Naive thymus-derived CD4-positive, alpha-beta T cell (primary cell): ENCODE measurements at regions of chr7 and their contacts with region 1.

Region 1: DNA sequence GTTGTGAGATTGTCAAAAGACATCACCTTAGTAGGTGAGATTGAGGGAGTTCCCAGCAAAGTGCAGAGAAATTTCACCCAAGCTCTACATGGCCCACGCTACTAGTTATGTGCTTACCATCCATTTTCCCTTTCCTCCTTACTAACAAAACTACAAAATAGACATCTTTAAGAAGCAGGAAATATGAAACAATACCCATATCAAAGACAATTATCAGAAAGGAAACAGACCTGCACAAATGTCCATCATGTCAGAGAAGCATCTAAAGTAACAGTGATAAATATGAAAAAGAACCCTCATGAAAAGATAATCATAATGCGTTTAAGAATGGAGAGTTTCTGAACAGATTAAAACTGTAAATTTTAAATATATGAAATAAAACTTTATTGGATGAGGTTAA is 28.2 kb downstream of the GIMAP4 start:
- DNase-seq: no peak
- ATAC-seq: no peak
- H3K4me3 ChIP-seq: no peak overlapping the region
- H3K4me3 Mint-ChIP-seq: peak overlapping the region in 8 of 10 donors; percentile 2 to 56 (median 29)
- H3K27ac ChIP-seq: no peak overlapping the region
- H3K27ac Mint-ChIP-seq: peak overlapping the region in 7 of 9 donors; percentile 8 to 82 (median 49)
- H3K4me1 ChIP-seq: peaks cover 7 to 18% of the 10 kb centered on the region in 2 donors
- H3K4me1 Mint-ChIP-seq: peaks cover 33 to 87% (median 79%) of the 10 kb centered on the region in 7 donors
- H3K27me3 ChIP-seq: no peaks in the 10 kb centered on the region
- H3K27me3 Mint-ChIP-seq: no peaks in the 10 kb centered on the region

Region 2: DNA sequence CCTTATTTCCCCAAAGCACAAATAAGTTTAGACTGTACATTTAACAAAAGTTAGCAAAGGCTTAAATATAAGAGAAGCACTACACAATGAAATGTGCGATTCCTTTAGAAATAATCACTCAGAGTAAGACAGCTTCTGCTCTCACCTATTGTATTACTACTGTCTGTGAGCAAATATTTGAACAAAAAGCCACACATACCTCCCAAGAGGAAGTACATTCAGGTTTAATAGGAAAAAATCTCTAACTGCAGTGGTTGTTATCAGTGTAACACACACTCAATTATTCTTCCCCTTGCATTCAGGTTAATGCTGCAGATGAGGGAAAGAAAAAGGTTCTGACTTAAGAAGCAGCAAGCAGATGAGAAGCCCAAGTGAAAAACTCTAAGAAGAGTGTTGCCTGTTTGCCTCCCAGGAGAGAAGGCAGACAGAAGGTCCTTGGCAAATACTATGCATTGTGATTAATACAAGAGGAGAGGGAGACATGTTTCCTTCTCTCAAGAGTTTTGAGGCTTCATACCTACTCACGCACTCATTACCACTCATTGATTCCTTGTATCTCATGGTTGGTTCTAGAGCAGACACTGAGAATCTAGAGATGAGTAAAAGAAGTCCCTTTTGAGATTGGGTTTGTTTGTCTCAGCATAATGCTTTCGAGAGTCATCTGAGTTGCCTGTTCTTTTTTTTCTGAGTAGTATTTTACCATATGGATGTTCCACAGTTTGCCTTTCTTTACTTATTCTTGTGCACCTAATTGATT is 14.5 kb before region 1 on chr7:
- CTCF ChIA-PET with region 1: interaction called, 3 read pairs
- POLR2A ChIA-PET with region 1: interaction called, 26 read pairs
- intact Hi-C with region 1: loop called in 1 of 2 experiments (anchors 2 kb)
- DNase-seq: no peak
- ATAC-seq: no peak
- H3K4me3 ChIP-seq: no peak overlapping the region
- H3K4me3 Mint-ChIP-seq: peak overlapping the region in 2 of 10 donors; percentile 16 to 40
- H3K27ac ChIP-seq: no peak overlapping the region
- H3K27ac Mint-ChIP-seq: peak overlapping the region in 8 of 9 donors; percentile 5 to 78 (median 66)
- H3K4me1 ChIP-seq: peaks cover 1 to 5% of the 10 kb centered on the region in 2 donors
- H3K4me1 Mint-ChIP-seq: peaks cover 11 to 83% (median 71%) of the 10 kb centered on the region in 7 donors
- H3K27me3 ChIP-seq: no peaks in the 10 kb centered on the region
- H3K27me3 Mint-ChIP-seq: no peaks in the 10 kb centered on the region

Region 3: DNA sequence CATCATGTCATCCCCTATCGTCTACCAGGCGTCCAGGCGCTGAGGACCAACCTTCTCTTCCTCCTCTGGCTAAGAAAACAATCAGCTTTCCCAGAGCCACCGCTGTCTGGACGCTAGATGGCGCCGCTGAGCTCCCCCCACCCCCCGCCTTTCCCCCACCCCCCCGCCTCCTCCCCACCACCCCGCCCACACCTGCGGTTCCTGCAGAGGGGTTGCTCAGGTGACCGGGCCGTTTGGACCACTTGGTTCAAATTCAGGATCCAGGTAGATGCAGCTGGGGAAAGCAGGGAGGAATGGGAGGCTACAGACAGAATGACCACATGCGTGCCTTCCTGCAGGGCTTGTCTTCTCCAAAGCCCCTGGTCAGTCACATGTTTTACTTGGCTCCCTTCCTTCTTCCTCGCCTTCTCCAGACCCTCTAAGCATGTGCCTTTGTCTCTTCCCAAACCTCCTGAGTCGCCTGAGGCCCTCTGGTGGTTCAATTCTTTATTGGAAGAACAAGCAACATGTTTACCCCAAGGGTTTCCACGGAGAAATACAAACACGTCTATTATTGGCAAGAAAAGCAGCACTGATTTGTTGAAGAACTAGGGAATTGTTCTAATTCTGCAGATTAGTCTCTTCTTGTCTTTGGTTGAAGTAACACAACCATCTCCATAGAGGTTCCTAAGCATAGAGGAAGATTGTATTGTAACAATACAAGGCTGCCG is 281.6 kb after region 1 on chr7:
- CTCF ChIA-PET with region 1: no interaction called
- POLR2A ChIA-PET with region 1: no interaction called
- intact Hi-C with region 1: no loop called
- DNase-seq: peak in 8 of 9 donors; percentile 24 to 68 (median 51)
- ATAC-seq: peak; percentile 73
- H3K4me3 ChIP-seq: no peak overlapping the region
- H3K4me3 Mint-ChIP-seq: peak overlapping the region in 8 of 10 donors; percentile 45 to 68 (median 56)
- H3K27ac ChIP-seq: no peak overlapping the region
- H3K27ac Mint-ChIP-seq: peak overlapping the region in 8 of 9 donors; percentile 35 to 91 (median 75)
- H3K4me1 ChIP-seq: peaks cover 7 to 11% of the 10 kb centered on the region in 2 donors
- H3K4me1 Mint-ChIP-seq: peaks cover 3 to 32% (median 29%) of the 10 kb centered on the region in 7 donors
- H3K27me3 ChIP-seq: no peaks in the 10 kb centered on the region
- H3K27me3 Mint-ChIP-seq: peaks cover 0 to 63% (median 0%) of the 10 kb centered on the region in 5 donors